ENCODE measurements at regions of chr19 and their contacts with region 1.

Region 1: GRCh38 chr19:54448774-54449700 is at the start of gene LENG8:
- DNase-seq: peak; percentile 97
- H3K4me3 ChIP-seq: peak within 1 kb of the TSS; percentile 85
- H3K27ac ChIP-seq: peak within 1 kb of the TSS; percentile 98
- H3K4me1 ChIP-seq: peaks cover 14% of the 10 kb centered on the region
- H3K27me3 ChIP-seq: no peaks in the 10 kb centered on the region
- CTCF ChIP-seq: no peak
- total RNA-seq, gene LENG8: 129 and 149 TPM in 2 replicates

Region 2: GRCh38 chr19:54473021-54473891 is 24.2 kb after region 1 on chr19 and contains the start of gene CDC42EP5:
- CTCF ChIA-PET with region 1: no interaction called
- POLR2A ChIA-PET with region 1: interaction called, 14 read pairs
- intact Hi-C with region 1: no loop called
- DNase-seq: peak; percentile 97
- H3K4me3 ChIP-seq: peak within 1 kb of the TSS; percentile 64
- H3K27ac ChIP-seq: peak within 1 kb of the TSS; percentile 97
- H3K4me1 ChIP-seq: peaks cover 33% of the 10 kb centered on the region
- H3K27me3 ChIP-seq: no peaks in the 10 kb centered on the region
- CTCF ChIP-seq: no peak
- total RNA-seq, gene CDC42EP5: 111 and 119 TPM in 2 replicates